Pancreas (tissue), 10 donors: ENCODE measurements at regions of chr16 and their contacts with region 1.

Region 1: GRCh38 chr16:81730090-81731051 is 48.7 kb upstream of the PLCG2 start:
- DNase-seq: peak; percentile 84 to 93 (median 89)
- ATAC-seq: peak; percentile 86 to 95 (median 94)
- H3K4me3 ChIP-seq: peak overlapping the region in 3 of 4 donors; percentile 12 to 42 (median 27)
- H3K27ac ChIP-seq: peak overlapping the region in 2 of 4 donors; percentile 41 to 64
- H3K4me1 ChIP-seq: peaks cover 0 to 7% (median 0%) of the 10 kb centered on the region in 3 donors
- H3K27me3 ChIP-seq: no peaks in the 10 kb centered on the region
- CTCF ChIP-seq: peak; percentile 56 to 70 (median 63)

Region 2: DNA sequence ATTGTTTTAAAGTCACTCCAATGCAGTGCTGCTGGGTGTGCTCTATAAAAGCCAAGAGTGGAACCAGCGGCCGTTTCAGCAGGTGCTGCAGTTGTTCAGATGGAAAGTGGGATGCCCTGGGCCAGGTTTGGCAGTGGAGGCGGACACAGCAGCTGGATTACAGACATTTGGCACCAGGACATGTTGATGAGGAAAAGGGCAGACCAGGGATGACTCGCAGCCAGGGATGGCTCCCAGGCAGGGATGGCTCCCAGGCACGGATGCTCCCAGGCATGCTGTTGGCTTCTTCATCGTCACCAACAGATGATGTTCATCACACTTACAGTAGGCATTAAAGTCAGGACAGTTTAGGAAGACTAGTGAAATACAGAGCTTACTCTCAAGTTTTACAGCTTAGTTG is 405.6 kb before region 1 on chr16:
- intact Hi-C with region 1: no loop called
- DNase-seq: no peak
- ATAC-seq: no peak
- H3K4me3 ChIP-seq: no peak overlapping the region
- H3K27ac ChIP-seq: no peak overlapping the region
- H3K4me1 ChIP-seq: no peaks in the 10 kb centered on the region
- H3K27me3 ChIP-seq: no peaks in the 10 kb centered on the region
- CTCF ChIP-seq: no peak

Region 3: GRCh38 chr16:81403616-81404373 is 326.6 kb before region 1 on chr16:
- intact Hi-C with region 1: loop called in 1 of 3 experiments (anchors 5 kb)
- DNase-seq: peak; percentile 67 to 98 (median 87)
- ATAC-seq: peak; percentile 94 to 97 (median 96)
- H3K4me3 ChIP-seq: peak overlapping the region in 1 of 4 donors; percentile 26
- H3K27ac ChIP-seq: no peak overlapping the region
- H3K4me1 ChIP-seq: peaks cover 0 to 3% (median 0%) of the 10 kb centered on the region in 3 donors
- H3K27me3 ChIP-seq: no peaks in the 10 kb centered on the region
- CTCF ChIP-seq: peak; percentile 92 to 97 (median 96)